IMR-90 (cell line): ENCODE measurements at regions of chr6 and their contacts with region 1.

Region 1: GRCh38 chr6:26312501-26313390 is 52.3 kb upstream of the BTN3A2 start:
- DNase-seq: peak; percentile 95
- ATAC-seq: peak; percentile 83
- H3K4me3 ChIP-seq: peak overlapping the region; percentile 75
- H3K27ac ChIP-seq: no peak overlapping the region
- H3K4me1 ChIP-seq: peaks cover 7% of the 10 kb centered on the region; the same call in 1 of the 2 replicates
- H3K27me3 ChIP-seq: no peaks in the 10 kb centered on the region
- CTCF ChIP-seq: no peak
- POLR2A ChIP-seq: no peak
- RAD21 ChIP-seq: no peak

Region 2: DNA sequence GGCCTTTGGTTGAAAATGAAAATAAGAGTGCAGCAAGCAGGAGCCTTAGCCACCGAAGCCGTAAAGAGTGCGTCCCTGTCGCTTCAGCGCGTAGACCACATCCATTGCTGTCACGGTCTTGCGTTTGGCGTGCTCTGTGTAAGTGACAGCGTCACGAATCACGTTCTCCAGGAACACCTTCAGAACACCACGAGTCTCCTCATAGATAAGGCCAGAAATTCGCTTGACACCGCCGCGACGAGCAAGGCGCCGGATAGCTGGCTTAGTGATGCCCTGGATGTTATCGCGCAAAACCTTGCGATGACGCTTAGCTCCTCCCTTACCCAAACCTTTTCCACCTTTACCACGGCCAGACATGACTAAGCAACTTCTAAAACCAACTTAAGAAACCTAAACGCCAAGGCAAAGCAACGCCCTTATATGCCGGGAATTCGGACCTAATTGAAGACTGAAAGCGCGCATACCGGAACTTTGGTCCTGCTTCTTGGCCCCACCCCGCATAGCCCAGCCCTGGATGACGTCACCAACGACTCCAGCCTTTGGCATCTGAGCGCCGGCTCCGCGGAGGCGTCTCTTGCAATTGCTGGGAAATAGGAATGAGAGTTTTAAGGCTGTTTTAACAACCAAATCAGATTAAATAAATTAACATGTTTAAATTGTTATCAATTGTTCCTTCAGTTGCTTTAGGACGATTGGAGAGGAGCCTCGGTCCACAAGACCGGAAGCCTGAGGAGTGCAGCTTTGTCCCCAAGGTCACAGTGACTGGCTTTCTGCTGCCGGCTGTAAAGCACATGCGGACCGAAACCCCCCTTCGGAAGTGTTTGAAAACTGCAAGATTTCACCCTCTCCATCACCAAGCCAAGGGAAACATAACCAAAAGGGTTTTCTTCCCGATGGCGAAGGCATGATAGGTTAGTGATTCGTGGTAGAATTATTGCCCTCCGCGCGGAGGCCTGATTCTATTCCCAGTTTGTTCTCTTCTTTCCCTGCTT is 27.3 kb before region 1 on chr6:
- CTCF ChIA-PET with region 1: no interaction called
- POLR2A ChIA-PET with region 1: interaction called, 6 read pairs
- dilution Hi-C with region 1: no loop called
- in situ Hi-C with region 1: no loop called
- intact Hi-C with region 1: loop called (anchors 1 kb)
- DNase-seq: peak; percentile 99
- ATAC-seq: peak; percentile 85
- H3K4me3 ChIP-seq: peak overlapping the region; percentile 59
- H3K27ac ChIP-seq: peak overlapping the region; percentile 81
- H3K4me1 ChIP-seq: peaks cover 2% of the 10 kb centered on the region
- H3K27me3 ChIP-seq: no peaks in the 10 kb centered on the region
- CTCF ChIP-seq: no peak
- POLR2A ChIP-seq: peak; percentile 94
- RAD21 ChIP-seq: no peak; the same call in 1 of the 2 replicates

Region 3: GRCh38 chr6:26322645-26323482 is 10.1 kb after region 1 on chr6:
- CTCF ChIA-PET with region 1: interaction called, 4 read pairs
- POLR2A ChIA-PET with region 1: no interaction called
- dilution Hi-C with region 1: no loop called
- in situ Hi-C with region 1: no loop called
- intact Hi-C with region 1: loop called (anchors 1 kb)
- DNase-seq: peak; percentile 96
- ATAC-seq: peak; percentile 88
- H3K4me3 ChIP-seq: peak overlapping the region; percentile 61
- H3K27ac ChIP-seq: no peak overlapping the region
- H3K4me1 ChIP-seq: peaks cover 2% of the 10 kb centered on the region; the same call in 1 of the 2 replicates
- H3K27me3 ChIP-seq: no peaks in the 10 kb centered on the region
- CTCF ChIP-seq: no peak
- POLR2A ChIP-seq: no peak
- RAD21 ChIP-seq: no peak

Region 4: GRCh38 chr6:26329763-26330511 is 17.2 kb after region 1 on chr6:
- CTCF ChIA-PET with region 1: interaction called, 3 read pairs
- POLR2A ChIA-PET with region 1: no interaction called
- dilution Hi-C with region 1: no loop called
- in situ Hi-C with region 1: no loop called
- intact Hi-C with region 1: loop called (anchors 2 kb)
- DNase-seq: peak; percentile 68
- ATAC-seq: 0 out of 2 replicates have a peak, but pooled peaks have one; percentile 19
- H3K4me3 ChIP-seq: no peak overlapping the region
- H3K27ac ChIP-seq: no peak overlapping the region
- H3K4me1 ChIP-seq: 0 out of 2 replicates have a peak, but pooled peaks cover 2% of the 10 kb centered on the region
- H3K27me3 ChIP-seq: no peaks in the 10 kb centered on the region
- CTCF ChIP-seq: no peak
- POLR2A ChIP-seq: no peak
- RAD21 ChIP-seq: no peak

Region 5: DNA sequence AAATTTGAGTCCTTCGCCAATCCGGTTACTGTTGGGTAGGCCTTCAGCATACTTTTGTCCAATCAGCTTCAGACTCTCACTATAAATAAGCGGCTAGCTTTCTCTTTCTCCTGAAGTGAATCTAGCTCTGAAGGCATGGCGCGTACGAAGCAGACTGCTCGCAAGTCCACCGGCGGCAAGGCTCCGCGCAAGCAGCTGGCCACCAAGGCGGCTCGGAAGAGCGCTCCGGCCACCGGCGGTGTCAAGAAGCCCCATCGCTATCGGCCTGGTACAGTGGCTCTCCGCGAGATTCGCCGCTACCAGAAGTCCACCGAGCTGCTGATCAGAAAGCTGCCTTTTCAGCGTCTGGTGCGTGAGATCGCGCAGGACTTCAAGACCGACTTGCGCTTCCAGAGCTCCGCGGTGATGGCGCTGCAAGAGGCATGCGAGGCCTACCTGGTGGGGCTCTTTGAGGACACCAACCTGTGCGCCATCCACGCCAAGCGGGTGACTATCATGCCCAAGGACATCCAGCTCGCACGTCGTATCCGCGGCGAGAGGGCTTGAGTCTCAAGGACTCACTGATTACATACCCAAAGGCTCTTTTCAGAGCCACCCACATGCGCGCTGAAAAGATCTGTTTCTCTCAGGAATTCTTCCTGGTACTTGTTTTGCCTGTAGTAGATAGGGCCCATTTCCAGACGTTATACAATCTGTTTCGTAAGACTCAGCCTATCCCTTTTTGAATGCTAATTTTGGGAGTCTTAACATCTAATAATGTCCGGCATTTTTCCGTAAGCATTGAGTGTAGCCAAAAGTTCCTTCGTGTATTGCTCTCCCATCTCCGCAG is 1497.4 kb after region 1 on chr6:
- CTCF ChIA-PET with region 1: no interaction called
- POLR2A ChIA-PET with region 1: no interaction called
- dilution Hi-C with region 1: no loop called
- in situ Hi-C with region 1: loop called (anchors 25 kb)
- intact Hi-C with region 1: no loop called
- DNase-seq: peak; percentile 98
- ATAC-seq: peak; percentile 52
- H3K4me3 ChIP-seq: peak overlapping the region; percentile 58
- H3K27ac ChIP-seq: peak overlapping the region; percentile 87
- H3K4me1 ChIP-seq: peaks cover 3% of the 10 kb centered on the region
- H3K27me3 ChIP-seq: no peaks in the 10 kb centered on the region
- CTCF ChIP-seq: 0 out of 2 replicates have a peak, but pooled peaks have one; percentile 16
- POLR2A ChIP-seq: peak; percentile 99
- RAD21 ChIP-seq: no peak